Naive thymus-derived CD8-positive, alpha-beta T cell (primary cell): ENCODE measurements at regions of chr10 and their contacts with region 1.

Region 1: GRCh38 chr10:72273410-72274212 is at the start of gene DDIT4:
- DNase-seq: peak; percentile 93 to 98 (median 97)
- ATAC-seq: peak; percentile 92 to 93
- H3K4me3 Mint-ChIP-seq: peak within 1 kb of the TSS; percentile 94 to 100 (median 98)
- H3K27ac Mint-ChIP-seq: peak within 1 kb of the TSS; percentile 89 to 99 (median 96)
- H3K4me1 Mint-ChIP-seq: peaks cover 28 to 61% (median 55%) of the 10 kb centered on the region in 4 donors
- H3K27me3 Mint-ChIP-seq: no peaks in the 10 kb centered on the region
- polyA plus RNA-seq, gene DDIT4: 68.0 to 190 (median 189) TPM

Region 2: GRCh38 chr10:72079356-72079755 is 194.3 kb before region 1 on chr10:
- POLR2A ChIA-PET with region 1: no interaction called
- DNase-seq: peak; percentile 80 to 98 (median 92)
- ATAC-seq: peak; percentile 75 to 81
- H3K4me3 Mint-ChIP-seq: peak overlapping the region; percentile 88 to 96 (median 94)
- H3K27ac Mint-ChIP-seq: peak overlapping the region; percentile 92 to 99 (median 97)
- H3K4me1 Mint-ChIP-seq: peaks cover 57 to 99% (median 95%) of the 10 kb centered on the region in 4 donors
- H3K27me3 Mint-ChIP-seq: peaks cover 0 to 1% (median 0%) of the 10 kb centered on the region in 5 donors

Region 3: DNA sequence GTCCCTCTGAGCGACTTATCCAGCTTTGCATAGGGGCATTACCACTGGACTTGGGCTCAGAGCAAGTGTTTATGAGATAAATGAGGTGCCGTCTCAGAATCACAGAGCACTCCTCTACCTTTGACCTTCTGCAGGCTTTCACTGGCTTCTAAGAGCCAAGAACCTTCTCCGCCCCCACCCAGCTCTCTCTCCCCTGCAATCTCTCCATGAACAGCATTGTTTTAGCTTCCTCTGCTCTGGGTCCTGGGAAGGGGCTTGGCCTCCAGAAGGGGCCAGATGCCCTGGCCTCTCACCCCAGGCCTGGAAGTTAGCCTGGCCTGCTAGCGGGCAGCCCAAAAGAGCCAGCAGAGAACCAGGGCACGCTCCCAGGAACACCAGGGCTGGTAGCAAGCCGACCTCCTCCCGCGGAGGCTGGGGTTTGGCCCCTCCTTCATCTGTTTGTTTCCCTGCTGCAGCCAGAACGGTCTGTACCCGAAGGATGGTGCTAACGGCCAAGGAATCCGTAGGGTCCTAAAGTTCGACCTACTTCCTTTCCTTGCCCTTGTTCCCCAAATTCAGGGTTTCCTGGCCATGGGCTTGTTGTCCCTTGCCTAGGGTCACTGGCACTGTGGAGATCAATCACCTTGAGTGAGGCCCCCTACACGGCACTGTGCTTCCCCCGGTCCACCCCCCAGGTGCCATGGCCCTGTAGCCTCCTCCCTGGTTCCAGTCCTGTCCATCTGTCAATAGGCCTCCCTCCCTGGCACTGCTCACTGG is 18.6 kb before region 1 on chr10:
- POLR2A ChIA-PET with region 1: interaction called, 83 read pairs
- DNase-seq: peak in 6 of 10 donors; percentile 28 to 67 (median 41)
- ATAC-seq: peak; percentile 71 to 85
- H3K4me3 Mint-ChIP-seq: peak overlapping the region; percentile 66 to 92 (median 78)
- H3K27ac Mint-ChIP-seq: peak overlapping the region; percentile 93 to 98 (median 96)
- H3K4me1 Mint-ChIP-seq: peaks cover 47 to 89% (median 84%) of the 10 kb centered on the region in 4 donors
- H3K27me3 Mint-ChIP-seq: no peaks in the 10 kb centered on the region

Region 4: GRCh38 chr10:72297968-72298773 is 24.6 kb after region 1 on chr10:
- POLR2A ChIA-PET with region 1: interaction called, 62 read pairs
- DNase-seq: peak; percentile 51 to 90 (median 78)
- ATAC-seq: peak; percentile 51
- H3K4me3 Mint-ChIP-seq: peak overlapping the region; percentile 39 to 89 (median 82)
- H3K27ac Mint-ChIP-seq: peak overlapping the region; percentile 43 to 100 (median 97)
- H3K4me1 Mint-ChIP-seq: peaks cover 25 to 63% (median 58%) of the 10 kb centered on the region in 4 donors
- H3K27me3 Mint-ChIP-seq: peaks cover 0 to 2% (median 0%) of the 10 kb centered on the region in 5 donors

Region 5: DNA sequence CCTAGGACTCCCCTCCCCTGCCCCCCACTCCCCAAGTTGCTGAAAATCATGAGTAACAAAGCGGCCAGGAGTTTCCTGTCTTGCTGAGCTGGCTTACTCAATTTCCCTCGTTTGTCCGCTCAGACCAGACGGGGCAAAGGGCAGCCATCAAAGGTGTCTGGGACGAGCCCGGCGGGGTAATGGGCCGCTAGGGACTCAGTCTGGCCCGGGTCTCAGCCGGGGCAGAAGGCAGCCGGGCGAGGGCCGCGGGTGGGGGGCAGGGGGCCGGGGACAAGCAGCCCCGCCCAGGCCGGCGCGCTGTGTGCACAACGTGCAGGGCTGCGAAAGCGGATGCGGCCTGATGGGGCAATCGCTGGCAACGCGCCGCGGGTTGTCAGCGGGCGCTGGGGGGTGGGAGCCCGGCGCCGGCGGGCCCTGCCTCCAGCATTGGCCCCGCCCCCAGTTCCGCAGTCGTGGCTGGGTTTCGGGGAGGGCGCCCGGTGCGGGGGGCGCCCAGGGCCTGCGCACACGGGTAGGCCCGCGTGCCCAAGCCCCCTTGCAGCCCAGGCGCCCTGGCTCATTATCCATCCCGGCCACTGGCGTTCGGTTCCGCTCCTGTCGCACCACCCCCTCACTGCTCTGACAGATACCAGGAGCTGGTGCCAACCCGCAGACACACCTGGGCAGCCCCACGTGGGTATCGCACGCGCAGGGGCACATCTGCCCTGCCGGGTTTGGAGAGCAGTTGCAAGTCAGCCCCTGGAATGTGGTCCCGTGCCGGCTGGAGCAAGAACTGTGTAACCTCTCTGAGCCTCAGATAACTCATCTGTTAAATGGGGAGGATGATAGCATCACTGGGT is 46.0 kb after region 1 on chr10:
- POLR2A ChIA-PET with region 1: interaction called, 162 read pairs
- DNase-seq: peak; percentile 78 to 93 (median 88)
- ATAC-seq: peak; percentile 71 to 82
- H3K4me3 Mint-ChIP-seq: peak overlapping the region; percentile 67 to 85 (median 82)
- H3K27ac Mint-ChIP-seq: peak overlapping the region; percentile 90 to 99 (median 98)
- H3K4me1 Mint-ChIP-seq: peaks cover 46 to 90% (median 88%) of the 10 kb centered on the region in 4 donors
- H3K27me3 Mint-ChIP-seq: no peaks in the 10 kb centered on the region

Region 6: GRCh38 chr10:72337020-72337629 is 63.5 kb after region 1 on chr10:
- POLR2A ChIA-PET with region 1: interaction called, 120 read pairs
- DNase-seq: peak; percentile 39 to 79 (median 62)
- ATAC-seq: peak in 1 of 2 donors; percentile 11
- H3K4me3 Mint-ChIP-seq: peak overlapping the region in 3 of 10 donors; percentile 9 to 78 (median 22)
- H3K27ac Mint-ChIP-seq: peak overlapping the region in 9 of 10 donors; percentile 2 to 99 (median 98)
- H3K4me1 Mint-ChIP-seq: peaks cover 22 to 64% (median 61%) of the 10 kb centered on the region in 4 donors
- H3K27me3 Mint-ChIP-seq: no peaks in the 10 kb centered on the region

Region 7: GRCh38 chr10:73344269-73344668 is 1070.7 kb after region 1 on chr10:
- POLR2A ChIA-PET with region 1: no interaction called
- DNase-seq: no peak
- ATAC-seq: no peak
- H3K4me3 Mint-ChIP-seq: no peak overlapping the region
- H3K27ac Mint-ChIP-seq: peak overlapping the region in 1 of 10 donors; percentile 19
- H3K4me1 Mint-ChIP-seq: no peaks in the 10 kb centered on the region
- H3K27me3 Mint-ChIP-seq: no peaks in the 10 kb centered on the region